ENCODE measurements at regions of chr4 and their contacts with region 1.

Region 1: GRCh38 chr4:55345980-55346850 is at the start of gene SRD5A3:
- DNase-seq: peak; percentile 87 to 89
- H3K4me3 ChIP-seq: peak within 1 kb of the TSS; percentile 31 to 47 (median 46)
- H3K27ac ChIP-seq: peak within 1 kb of the TSS; percentile 92 to 96 (median 95)
- H3K4me1 ChIP-seq: peaks cover 0 to 7% of the 10 kb centered on the region in 2 donors
- H3K27me3 ChIP-seq: no peaks in the 10 kb centered on the region
- CTCF ChIP-seq: peak; percentile 57 to 96 (median 92)
- POLR2A ChIP-seq: peak in 1 of 2 donors; percentile 79
- total RNA-seq, gene SRD5A3: 2.7 to 12.0 (median 7.0) TPM

Region 2: DNA sequence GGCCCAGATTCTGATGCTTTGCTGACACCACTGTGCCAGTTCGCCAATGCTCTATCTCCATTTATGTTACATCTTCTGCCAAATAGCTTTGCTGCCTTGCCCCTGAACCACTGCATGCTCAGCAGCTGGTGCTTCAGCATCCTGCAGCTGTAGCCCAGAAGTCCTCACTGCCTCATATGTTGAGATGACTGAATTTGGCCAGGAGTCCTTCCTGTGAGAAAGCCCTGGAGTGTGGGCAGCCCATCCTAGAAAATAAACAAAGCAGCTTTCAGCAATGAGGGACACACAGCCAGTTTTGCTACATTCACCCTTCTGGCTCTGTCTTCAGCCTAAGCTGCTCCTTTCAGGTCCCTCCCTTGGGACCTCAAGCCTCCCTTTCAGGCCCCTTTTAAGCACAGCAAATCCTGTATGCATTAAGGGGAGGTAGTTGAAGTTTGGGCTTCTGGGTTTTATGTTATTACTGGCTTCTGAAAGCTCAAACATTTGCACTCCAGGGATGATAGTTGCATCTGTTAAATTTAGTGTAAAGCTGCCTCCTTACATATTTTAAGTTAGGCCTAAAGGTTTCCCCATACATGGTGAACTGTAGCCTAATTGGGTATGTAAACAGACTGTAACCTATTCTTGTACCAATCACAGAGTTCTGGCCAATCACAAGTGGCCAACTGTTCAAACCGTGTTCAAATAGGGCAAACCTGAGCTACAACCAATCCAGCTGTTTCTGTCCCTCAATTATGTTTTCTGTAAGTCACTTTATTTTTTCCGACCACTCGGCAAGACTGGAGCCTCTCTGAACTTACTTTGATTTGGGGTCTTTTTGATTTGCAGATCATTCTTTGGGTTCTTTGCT is 47.5 kb after region 1 on chr4:
- intact Hi-C with region 1: loop called (anchors 5 kb)
- DNase-seq: no peak
- H3K4me3 ChIP-seq: no peak overlapping the region
- H3K27ac ChIP-seq: no peak overlapping the region
- H3K4me1 ChIP-seq: peaks cover 17 to 22% of the 10 kb centered on the region in 2 donors
- H3K27me3 ChIP-seq: no peaks in the 10 kb centered on the region
- CTCF ChIP-seq: no peak
- POLR2A ChIP-seq: no peak

Region 3: GRCh38 chr4:55736605-55737183 is 390.5 kb after region 1 on chr4:
- intact Hi-C with region 1: loop called (anchors 10 kb)
- DNase-seq: no peak
- H3K4me3 ChIP-seq: no peak overlapping the region
- H3K27ac ChIP-seq: no peak overlapping the region
- H3K4me1 ChIP-seq: no peaks in the 10 kb centered on the region
- H3K27me3 ChIP-seq: no peaks in the 10 kb centered on the region
- CTCF ChIP-seq: peak in 3 of 6 experiments; percentile 38 to 57 (median 42)
- POLR2A ChIP-seq: no peak

Region 4: GRCh38 chr4:55866973-55867574 is 520.9 kb after region 1 on chr4:
- intact Hi-C with region 1: loop called (anchors 5 kb)
- DNase-seq: peak in 1 of 2 donors; percentile 4
- H3K4me3 ChIP-seq: no peak overlapping the region
- H3K27ac ChIP-seq: no peak overlapping the region
- H3K4me1 ChIP-seq: no peaks in the 10 kb centered on the region
- H3K27me3 ChIP-seq: no peaks in the 10 kb centered on the region
- CTCF ChIP-seq: peak; percentile 55 to 87 (median 64)
- POLR2A ChIP-seq: no peak